MCF 10A (cell line): ENCODE measurements at regions of chr3 and their contacts with region 1.

Region 1: DNA sequence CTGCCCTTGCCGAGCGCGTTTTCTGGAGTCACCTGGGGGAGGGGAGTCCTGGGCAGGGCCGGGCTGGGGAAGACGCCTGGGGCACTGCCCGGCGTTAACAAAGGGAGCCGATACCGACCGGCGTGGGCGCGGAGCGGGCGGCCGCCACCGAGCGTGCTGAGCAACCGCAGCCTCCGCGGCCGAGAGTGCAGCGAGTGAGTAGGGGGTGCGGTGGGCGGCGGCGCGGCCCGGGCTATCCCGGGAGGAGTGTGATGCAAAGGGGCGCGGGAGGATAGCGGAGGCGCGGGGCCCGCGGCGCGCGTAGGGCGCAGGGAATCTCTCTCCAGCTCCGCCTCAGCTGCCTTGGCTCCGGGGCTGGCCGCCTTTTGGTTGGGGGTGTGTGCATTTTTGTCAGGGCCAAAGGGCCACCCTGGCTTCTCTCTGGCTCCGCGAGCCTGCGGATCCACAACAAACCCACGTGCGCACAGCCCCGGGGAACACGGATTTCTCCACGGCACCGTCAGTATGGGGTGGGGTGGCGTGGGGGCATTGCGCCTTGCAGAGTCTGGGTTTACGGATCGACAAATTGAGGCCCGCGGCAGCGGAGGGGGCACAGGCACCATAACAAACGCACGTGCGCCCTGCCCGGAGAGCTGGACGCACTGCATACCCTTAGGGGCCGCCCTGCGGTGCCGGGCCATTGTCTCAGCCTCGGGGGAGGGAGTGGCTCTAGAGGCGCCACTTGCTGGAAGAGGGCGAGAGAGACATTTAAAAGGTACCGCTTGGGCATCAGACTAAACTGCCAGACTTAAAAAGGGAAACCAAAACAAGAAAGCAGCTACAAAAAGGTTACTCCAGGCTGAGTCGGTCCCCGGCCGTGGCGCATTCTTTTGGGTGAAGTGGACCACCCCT is 560 bp downstream of the ST6GAL1 start:
- DNase-seq: peak; percentile 60
- H3K4me3 Mint-ChIP-seq: peak overlapping the region; percentile 88
- H3K27ac Mint-ChIP-seq: peak overlapping the region; percentile 64
- H3K4me1 Mint-ChIP-seq: peaks cover 26% of the 10 kb centered on the region
- H3K27me3 Mint-ChIP-seq: no peaks in the 10 kb centered on the region
- CTCF ChIP-seq: no peak

Region 2: GRCh38 chr3:186849374-186849975 is 81.4 kb before region 1 on chr3:
- CTCF ChIA-PET with region 1: interaction called, 20 read pairs
- POLR2A ChIA-PET with region 1: interaction called, 5 read pairs
- intact Hi-C with region 1: loop called (anchors 1 kb)
- DNase-seq: peak; percentile 55
- H3K4me3 Mint-ChIP-seq: no peak overlapping the region
- H3K27ac Mint-ChIP-seq: no peak overlapping the region
- H3K4me1 Mint-ChIP-seq: no peaks in the 10 kb centered on the region
- H3K27me3 Mint-ChIP-seq: peaks cover 29% of the 10 kb centered on the region
- CTCF ChIP-seq: peak; percentile 47

Region 3: GRCh38 chr3:186869253-186870100 is 61.4 kb before region 1 on chr3:
- CTCF ChIA-PET with region 1: no interaction called
- POLR2A ChIA-PET with region 1: no interaction called
- intact Hi-C with region 1: loop called (anchors 5 kb)
- DNase-seq: no peak
- H3K4me3 Mint-ChIP-seq: no peak overlapping the region
- H3K27ac Mint-ChIP-seq: no peak overlapping the region
- H3K4me1 Mint-ChIP-seq: no peaks in the 10 kb centered on the region
- H3K27me3 Mint-ChIP-seq: no peaks in the 10 kb centered on the region
- CTCF ChIP-seq: no peak

Region 4: GRCh38 chr3:186915806-186916796 is 14.8 kb before region 1 on chr3:
- CTCF ChIA-PET with region 1: interaction called, 3 read pairs
- POLR2A ChIA-PET with region 1: interaction called, 12 read pairs
- intact Hi-C with region 1: no loop called
- DNase-seq: peak; percentile 80
- H3K4me3 Mint-ChIP-seq: peak overlapping the region; percentile 38
- H3K27ac Mint-ChIP-seq: no peak overlapping the region
- H3K4me1 Mint-ChIP-seq: peaks cover 16% of the 10 kb centered on the region
- H3K27me3 Mint-ChIP-seq: no peaks in the 10 kb centered on the region
- CTCF ChIP-seq: no peak

Region 5: DNA sequence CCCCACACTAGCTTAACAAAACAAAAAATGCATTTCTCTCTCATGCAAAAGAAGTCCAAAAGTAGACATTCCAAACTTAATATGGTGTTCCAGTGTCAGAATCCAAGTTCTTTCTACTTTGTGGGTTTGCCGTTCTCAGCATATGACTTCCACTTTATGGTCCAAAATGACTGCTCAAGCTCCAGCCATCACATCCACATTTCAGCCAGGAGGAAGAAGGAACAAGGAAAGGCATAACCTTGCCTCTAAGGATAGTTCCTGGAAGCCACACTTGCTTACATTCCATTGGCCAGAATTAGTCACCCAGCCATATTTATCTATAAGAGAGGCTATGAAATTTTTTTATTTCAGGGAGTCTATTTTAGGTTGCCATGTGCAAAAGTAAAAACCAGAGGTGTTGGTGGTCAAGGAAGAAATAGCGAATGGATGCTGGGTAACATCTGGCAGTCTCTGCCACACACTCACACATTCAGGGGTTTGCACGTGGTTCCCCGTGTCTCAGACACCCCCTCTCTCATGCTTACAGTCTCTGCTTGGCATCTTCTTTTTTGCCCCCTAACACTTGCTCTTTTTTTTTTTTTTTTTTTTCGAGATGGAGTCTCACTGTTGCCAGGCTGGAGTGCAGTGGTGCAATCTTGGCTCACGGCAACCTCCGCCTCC is 139.1 kb after region 1 on chr3:
- CTCF ChIA-PET with region 1: no interaction called
- POLR2A ChIA-PET with region 1: no interaction called
- intact Hi-C with region 1: no loop called
- DNase-seq: no peak
- H3K4me3 Mint-ChIP-seq: no peak overlapping the region
- H3K27ac Mint-ChIP-seq: peak overlapping the region; percentile 13
- H3K4me1 Mint-ChIP-seq: peaks cover 14% of the 10 kb centered on the region
- H3K27me3 Mint-ChIP-seq: no peaks in the 10 kb centered on the region
- CTCF ChIP-seq: no peak

Region 6: DNA sequence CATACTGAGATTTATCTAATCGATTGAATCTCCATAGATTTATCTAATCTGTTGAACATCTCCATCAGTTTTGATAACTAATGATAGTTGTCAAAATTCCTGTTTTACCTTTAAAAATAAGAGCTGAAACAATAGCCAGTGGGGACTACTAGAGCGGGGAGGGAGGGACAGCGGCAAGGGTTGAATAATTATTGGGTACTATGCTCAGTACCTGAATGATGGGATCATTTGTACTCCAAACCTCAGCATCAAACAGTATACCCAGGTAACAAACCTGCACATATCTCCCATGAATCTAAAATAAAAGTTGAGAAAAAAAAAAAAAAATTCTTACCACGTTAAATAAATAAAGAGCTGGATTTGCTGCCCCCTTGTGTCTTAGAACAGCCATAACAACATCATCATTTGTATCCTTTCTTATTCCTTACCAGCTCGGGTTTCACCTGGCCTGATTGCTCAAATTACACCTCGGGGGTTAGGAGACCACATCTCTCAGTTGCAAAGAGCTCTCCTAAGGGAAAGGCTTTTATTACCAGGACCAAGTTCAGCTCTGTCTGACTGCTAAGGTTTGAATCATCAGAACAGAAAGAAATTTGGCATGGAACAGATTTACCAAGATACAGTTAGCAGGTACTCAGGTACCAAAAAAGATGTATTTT is 234.1 kb after region 1 on chr3:
- CTCF ChIA-PET with region 1: interaction called, 4 read pairs
- POLR2A ChIA-PET with region 1: interaction called, 4 read pairs
- intact Hi-C with region 1: loop called (anchors 5 kb)
- DNase-seq: peak; percentile 80
- H3K4me3 Mint-ChIP-seq: no peak overlapping the region
- H3K27ac Mint-ChIP-seq: no peak overlapping the region
- H3K4me1 Mint-ChIP-seq: peaks cover 10% of the 10 kb centered on the region
- H3K27me3 Mint-ChIP-seq: peaks cover 15% of the 10 kb centered on the region
- CTCF ChIP-seq: peak; percentile 54